AG04449 (cell line): ENCODE measurements at regions of chr20 and their contacts with region 1.

Region 1: DNA sequence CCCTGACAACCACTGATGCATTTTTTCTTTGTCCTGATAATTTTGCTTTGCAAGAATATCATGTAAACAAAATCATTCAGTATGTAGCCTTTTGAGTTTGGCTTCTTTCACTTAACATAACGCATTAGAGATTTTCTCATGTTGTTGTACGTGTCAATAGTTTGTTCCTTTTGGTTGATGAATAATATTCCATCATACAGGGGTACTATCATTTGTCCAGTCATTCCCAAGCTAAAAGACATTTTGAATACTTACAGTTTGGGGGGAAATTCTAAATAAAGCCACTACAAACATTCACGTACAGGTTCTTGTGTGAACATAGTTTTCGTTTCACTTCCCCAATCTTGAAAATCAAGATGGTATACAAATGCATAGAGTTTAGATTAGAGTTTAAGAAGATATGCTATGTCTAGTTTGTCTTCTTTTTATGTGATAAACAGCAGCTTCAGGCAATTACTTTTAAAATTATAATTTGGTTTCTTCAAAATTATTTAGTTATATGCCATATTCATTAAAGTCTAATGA is 5.2 kb downstream of the HAO1 start:
- DNase-seq: no peak
- H3K4me3 ChIP-seq: no peak overlapping the region
- CTCF ChIP-seq: no peak

Region 2: DNA sequence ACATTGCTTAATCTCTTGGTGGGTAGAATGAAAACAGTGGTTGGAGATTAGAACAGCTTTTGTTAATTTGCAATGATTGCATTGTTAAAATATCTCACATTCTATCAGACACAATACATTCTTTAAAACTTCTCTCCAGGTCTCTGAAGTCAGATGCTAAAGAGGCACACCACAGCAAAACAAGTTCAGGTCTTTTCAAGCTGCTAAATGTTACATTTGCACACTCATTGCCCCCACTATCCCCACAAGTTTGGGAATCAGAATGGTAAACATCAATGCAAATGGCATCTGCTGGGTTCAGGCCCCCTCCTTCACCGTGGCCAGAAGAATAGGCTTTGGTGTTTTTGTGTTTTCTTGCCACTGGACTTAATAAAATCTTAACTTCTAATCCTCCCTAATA is 15.3 kb after region 1 on chr20:
- CTCF ChIA-PET with region 1: interaction called, 12 read pairs
- POLR2A ChIA-PET with region 1: no interaction called
- DNase-seq: no peak
- H3K4me3 ChIP-seq: no peak overlapping the region
- CTCF ChIP-seq: no peak

Region 3: DNA sequence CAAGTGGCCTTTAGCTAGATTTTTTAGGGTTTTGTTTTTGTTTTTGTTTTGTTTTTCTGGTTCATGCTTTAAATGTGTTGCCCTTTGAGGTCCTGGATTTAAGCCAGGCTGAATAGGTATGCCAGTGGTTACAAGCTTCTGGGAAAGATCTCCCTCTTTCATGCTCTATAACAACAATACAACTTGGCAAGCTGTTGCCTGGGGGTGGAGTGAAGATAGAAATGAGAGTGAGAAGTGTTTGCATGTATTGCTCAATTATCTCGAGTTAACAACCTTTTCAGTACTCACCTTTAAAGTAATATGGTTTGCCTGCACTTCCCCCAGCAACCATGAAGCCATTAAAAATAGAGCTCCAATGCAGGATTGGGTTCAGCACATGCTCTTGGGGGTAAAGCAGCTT is 24.4 kb after region 1 on chr20:
- CTCF ChIA-PET with region 1: interaction called, 16 read pairs
- POLR2A ChIA-PET with region 1: no interaction called
- DNase-seq: no peak
- H3K4me3 ChIP-seq: no peak overlapping the region
- CTCF ChIP-seq: no peak

Region 4: DNA sequence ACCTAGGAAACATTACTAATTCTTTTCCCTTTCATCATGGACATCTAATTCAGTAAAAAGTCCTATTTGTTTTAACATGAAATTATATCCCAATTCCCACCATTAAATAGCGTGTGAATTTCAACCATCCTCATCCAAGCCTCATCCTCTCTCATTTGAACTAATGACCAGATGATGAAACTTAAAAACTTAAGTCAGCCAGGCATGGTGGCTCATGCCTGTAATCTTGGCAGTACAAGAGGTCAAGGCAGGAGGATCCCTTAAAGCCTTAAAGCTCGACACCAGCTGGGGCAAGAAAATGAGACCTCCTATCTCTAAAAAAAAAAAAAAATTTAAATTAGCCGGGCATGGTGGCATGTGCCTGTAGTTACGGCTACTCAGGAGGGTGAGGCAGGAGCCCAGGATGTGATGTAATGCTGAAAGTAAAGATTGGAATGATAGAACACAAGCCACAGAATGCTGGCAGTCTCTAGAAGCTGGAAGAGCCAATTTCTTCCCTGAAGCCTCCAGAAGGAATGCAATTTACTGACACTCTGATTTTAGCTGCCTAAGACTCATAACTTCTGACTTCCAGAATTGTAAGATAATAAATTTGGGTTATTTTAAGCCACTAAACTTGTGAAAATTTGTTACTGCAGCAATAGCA is 32.2 kb after region 1 on chr20:
- CTCF ChIA-PET with region 1: interaction called, 11 read pairs
- POLR2A ChIA-PET with region 1: no interaction called
- DNase-seq: peak; percentile 54
- H3K4me3 ChIP-seq: no peak overlapping the region
- CTCF ChIP-seq: no peak

Region 5: GRCh38 chr20:7989379-7989778 is 54.3 kb after region 1 on chr20:
- CTCF ChIA-PET with region 1: interaction called, 73 read pairs
- POLR2A ChIA-PET with region 1: no interaction called
- DNase-seq: no peak
- H3K4me3 ChIP-seq: no peak overlapping the region
- CTCF ChIP-seq: no peak

Region 6: GRCh38 chr20:7994809-7995208 is 59.7 kb after region 1 on chr20:
- CTCF ChIA-PET with region 1: interaction called, 73 read pairs
- POLR2A ChIA-PET with region 1: no interaction called
- DNase-seq: no peak
- H3K4me3 ChIP-seq: no peak overlapping the region
- CTCF ChIP-seq: no peak